ENCODE measurements at regions of chr10 and their contacts with region 1.

Region 1: DNA sequence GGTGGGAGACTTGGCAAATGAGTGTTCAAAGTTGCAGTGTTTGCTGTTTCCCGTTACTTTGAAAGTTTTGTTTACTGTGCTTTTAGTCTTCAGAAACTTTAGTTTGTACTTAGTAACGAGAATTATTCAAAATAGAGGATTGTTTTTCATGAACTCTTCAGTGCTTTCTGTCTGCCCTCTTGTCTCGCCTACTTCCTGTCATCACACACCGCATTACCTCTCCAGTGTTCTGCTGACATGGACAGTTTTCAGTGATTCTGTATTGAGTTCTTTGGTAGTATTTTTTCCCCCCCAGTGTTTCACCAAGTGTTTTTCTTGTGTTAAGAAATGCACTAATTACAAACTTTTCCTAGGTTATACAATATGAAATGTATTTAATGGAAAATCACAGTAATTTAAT is 207.0 kb downstream of the MLLT10 start:
- DNase-seq: peak in 12 of 14 experiments; percentile 17 to 85 (median 46)
- ATAC-seq: peak; percentile 93
- H3K4me3 ChIP-seq: no peak overlapping the region
- H3K4me3 Mint-ChIP-seq: peak overlapping the region; percentile 81
- H3K27ac ChIP-seq: peak overlapping the region; percentile 69 to 80
- H3K27ac Mint-ChIP-seq: peak overlapping the region; percentile 97
- H3K4me1 ChIP-seq: peaks cover 49% of the 10 kb centered on the region
- H3K4me1 Mint-ChIP-seq: peaks cover 67% of the 10 kb centered on the region
- H3K27me3 ChIP-seq: no peaks in the 10 kb centered on the region
- H3K27me3 Mint-ChIP-seq: no peaks in the 10 kb centered on the region
- CTCF ChIP-seq: no peak

Region 2: DNA sequence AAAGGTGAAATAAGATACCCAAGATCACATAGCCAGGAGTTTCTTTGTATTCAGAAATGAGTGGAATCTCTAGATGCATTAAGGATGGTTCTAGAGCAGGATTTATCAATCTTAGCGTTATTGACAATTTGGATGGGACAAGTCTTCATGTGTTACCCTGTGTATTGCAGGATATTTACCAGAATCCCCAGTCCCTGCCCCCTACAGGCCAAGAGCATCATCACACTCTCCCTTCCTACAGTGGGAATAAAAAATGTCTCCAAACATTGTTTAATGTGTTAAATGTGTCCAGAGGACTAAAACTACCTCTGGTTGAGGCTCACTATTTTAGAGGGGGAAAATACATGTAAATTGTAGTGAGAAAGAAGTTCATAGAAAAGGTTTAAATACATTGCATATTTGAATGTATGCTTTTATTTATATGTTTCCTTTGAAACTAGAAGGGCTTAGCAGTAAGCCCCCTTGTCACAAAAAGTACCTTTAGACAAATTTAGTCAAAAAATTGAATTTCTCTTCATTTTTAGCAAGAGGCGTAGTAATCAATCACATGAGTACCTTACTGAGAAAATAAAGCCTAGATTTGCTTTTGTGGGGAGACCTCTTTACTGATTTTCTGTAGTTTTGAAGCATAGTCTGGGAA is 65.7 kb before region 1 on chr10:
- CTCF ChIA-PET with region 1: no interaction called
- POLR2A ChIA-PET with region 1: no interaction called
- intact Hi-C with region 1: no loop called
- DNase-seq: peak in 9 of 14 experiments; percentile 4 to 61 (median 15)
- ATAC-seq: peak; percentile 78
- H3K4me3 ChIP-seq: no peak overlapping the region
- H3K4me3 Mint-ChIP-seq: no peak overlapping the region
- H3K27ac ChIP-seq: no peak overlapping the region
- H3K27ac Mint-ChIP-seq: no peak overlapping the region
- H3K4me1 ChIP-seq: no peaks in the 10 kb centered on the region
- H3K4me1 Mint-ChIP-seq: peaks cover 35% of the 10 kb centered on the region
- H3K27me3 ChIP-seq: no peaks in the 10 kb centered on the region
- H3K27me3 Mint-ChIP-seq: no peaks in the 10 kb centered on the region
- CTCF ChIP-seq: peak; percentile 82

Region 3: DNA sequence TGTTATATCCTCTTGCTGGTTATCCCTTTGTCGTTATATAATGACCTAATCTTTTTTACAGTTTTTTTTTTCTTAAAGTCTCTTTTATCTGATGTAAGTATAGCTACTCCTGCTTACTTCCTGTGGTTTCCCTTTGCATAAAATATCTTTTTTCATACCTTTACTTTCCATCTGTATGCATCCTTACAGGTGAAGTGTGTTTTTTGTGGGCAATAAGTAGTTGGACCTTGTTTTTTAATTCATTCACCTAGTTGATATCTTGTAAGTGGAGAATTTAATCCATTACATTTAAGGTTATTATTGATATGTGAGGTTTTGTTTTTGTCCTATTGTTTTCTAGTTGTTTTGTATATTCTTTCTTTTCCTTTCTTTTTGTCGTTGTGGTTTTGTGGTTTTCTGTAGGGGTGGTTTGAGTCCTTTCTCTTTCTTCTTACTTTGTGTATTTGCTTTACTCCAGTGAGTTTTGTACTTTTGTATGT is 38.3 kb before region 1 on chr10:
- CTCF ChIA-PET with region 1: no interaction called
- POLR2A ChIA-PET with region 1: no interaction called
- intact Hi-C with region 1: loop called in 1 of 2 experiments (anchors 5 kb)
- DNase-seq: peak in 3 of 14 experiments; percentile 48 to 74 (median 56)
- ATAC-seq: peak; percentile 86
- H3K4me3 ChIP-seq: no peak overlapping the region
- H3K4me3 Mint-ChIP-seq: peak overlapping the region; percentile 40
- H3K27ac ChIP-seq: no peak overlapping the region
- H3K27ac Mint-ChIP-seq: peak overlapping the region; percentile 55
- H3K4me1 ChIP-seq: peaks cover 18% of the 10 kb centered on the region
- H3K4me1 Mint-ChIP-seq: peaks cover 29% of the 10 kb centered on the region
- H3K27me3 ChIP-seq: no peaks in the 10 kb centered on the region
- H3K27me3 Mint-ChIP-seq: no peaks in the 10 kb centered on the region
- CTCF ChIP-seq: no peak

Region 4: DNA sequence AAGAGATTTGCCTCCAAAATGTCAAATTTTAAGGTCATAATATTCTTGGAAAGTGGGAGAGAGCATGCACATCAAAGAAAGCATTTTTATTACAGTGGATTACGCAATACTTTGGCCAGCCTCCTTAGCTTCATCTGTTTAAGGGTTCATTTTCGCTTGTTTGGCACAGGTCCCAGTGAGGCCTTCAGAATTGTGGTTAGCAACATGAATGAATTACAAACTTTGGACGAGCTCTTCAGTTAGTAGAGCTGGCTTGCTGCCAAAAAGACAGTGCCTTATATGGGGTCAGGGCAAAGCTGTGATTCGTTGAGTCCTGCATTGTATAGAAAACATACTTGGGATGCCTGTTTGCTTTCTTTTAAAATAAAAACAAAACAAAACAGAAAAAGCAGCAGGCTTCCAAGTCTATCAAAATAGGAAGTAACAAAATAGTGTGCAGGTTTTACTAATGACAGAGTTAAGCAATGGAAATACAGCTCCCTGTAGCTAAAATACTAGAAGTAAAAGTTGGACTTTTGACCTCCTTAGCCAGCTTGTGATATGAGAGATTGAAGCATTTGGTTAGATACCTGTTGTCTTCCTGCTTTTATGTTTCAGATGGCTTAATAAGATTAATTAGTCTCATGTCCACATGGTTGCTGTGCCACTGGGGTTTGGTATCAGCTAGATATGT is 16.2 kb before region 1 on chr10:
- CTCF ChIA-PET with region 1: interaction called, 4 read pairs
- POLR2A ChIA-PET with region 1: interaction called, 4 read pairs
- intact Hi-C with region 1: loop called in 1 of 2 experiments (anchors 2 kb)
- DNase-seq: peak in 13 of 14 experiments; percentile 28 to 77 (median 53)
- ATAC-seq: peak; percentile 59
- H3K4me3 ChIP-seq: no peak overlapping the region
- H3K4me3 Mint-ChIP-seq: no peak overlapping the region
- H3K27ac ChIP-seq: no peak overlapping the region
- H3K27ac Mint-ChIP-seq: peak overlapping the region; percentile 62
- H3K4me1 ChIP-seq: peaks cover 8% of the 10 kb centered on the region
- H3K4me1 Mint-ChIP-seq: peaks cover 52% of the 10 kb centered on the region
- H3K27me3 ChIP-seq: no peaks in the 10 kb centered on the region
- H3K27me3 Mint-ChIP-seq: no peaks in the 10 kb centered on the region
- CTCF ChIP-seq: no peak

Region 5: DNA sequence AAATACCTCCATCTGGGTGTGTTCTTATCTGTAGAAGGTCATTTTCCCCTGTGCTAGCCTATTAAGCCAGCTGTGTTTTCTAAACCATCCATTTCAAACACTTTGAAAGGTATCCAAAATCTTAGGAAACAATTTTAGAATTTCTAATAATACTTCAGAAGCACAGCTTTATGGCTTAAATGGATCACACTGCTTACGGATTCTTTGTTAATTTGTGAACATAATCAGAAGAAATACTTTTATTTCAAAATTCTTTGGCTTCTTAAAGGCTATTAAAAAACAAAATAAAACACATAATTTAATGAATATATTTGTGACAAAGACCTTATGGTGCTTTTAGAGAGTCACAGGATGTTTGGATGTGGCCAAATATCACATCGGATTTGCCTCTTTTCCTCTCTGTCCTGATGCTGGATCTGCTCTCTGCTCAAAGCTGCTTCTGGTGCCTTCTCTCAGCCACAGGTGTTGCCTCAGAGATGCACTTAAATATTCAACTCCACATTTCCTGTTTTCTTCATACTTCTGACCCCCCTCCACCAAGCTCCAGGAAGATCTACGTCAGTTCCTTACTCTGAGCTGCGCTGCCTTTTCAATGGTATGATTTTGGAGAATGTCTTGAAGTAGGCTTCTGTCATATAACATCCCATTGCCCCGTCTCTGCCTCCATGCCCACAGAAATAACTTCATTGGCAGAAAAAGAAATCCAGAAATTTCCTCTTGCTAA is 23.6 kb after region 1 on chr10:
- CTCF ChIA-PET with region 1: no interaction called
- POLR2A ChIA-PET with region 1: interaction called, 4 read pairs
- intact Hi-C with region 1: loop called in 1 of 2 experiments (anchors 2 kb)
- DNase-seq: peak in 9 of 14 experiments; percentile 5 to 69 (median 49)
- ATAC-seq: peak; percentile 96
- H3K4me3 ChIP-seq: no peak overlapping the region
- H3K4me3 Mint-ChIP-seq: peak overlapping the region; percentile 39
- H3K27ac ChIP-seq: peak overlapping the region; percentile 24 to 25
- H3K27ac Mint-ChIP-seq: peak overlapping the region; percentile 83
- H3K4me1 ChIP-seq: peaks cover 7% of the 10 kb centered on the region
- H3K4me1 Mint-ChIP-seq: peaks cover 14% of the 10 kb centered on the region
- H3K27me3 ChIP-seq: no peaks in the 10 kb centered on the region
- H3K27me3 Mint-ChIP-seq: no peaks in the 10 kb centered on the region
- CTCF ChIP-seq: no peak

Region 6: DNA sequence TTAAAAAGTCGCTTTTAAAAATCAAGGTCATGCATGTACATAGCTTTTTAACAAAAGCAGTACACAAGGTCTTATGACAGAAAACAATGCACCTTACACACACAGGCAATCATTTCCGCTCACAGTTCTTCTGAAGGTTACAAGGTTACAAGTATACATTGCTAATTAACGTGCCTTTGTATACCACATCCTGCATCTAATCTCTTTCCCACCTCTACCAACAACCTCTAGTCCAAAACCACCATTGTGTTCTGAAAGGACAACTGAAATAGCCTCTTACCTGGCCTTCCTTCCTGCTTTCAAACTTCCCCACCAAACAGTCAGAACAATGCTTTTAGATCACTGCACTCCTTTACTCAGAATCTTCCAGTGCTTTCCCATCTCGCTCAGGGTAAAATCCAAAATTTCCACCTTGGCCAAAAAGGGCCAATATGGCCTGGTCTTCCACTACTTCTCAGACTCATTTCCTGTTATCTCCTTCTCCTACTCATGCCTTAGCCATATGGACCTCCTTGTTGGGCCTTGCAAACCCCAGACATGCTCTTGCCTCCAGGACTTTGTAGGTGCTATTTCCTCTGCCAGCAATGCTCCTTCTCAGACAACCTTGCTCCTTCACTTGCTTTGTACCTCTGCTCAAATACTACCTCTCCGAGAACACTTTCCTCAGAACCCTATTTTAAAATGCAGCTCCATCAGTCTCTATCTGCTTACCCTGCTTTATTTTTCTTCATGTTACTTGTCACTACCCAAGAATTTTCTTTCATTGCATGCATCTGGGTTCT is 57.2 kb after region 1 on chr10:
- CTCF ChIA-PET with region 1: no interaction called
- POLR2A ChIA-PET with region 1: no interaction called
- intact Hi-C with region 1: loop called in 1 of 2 experiments (anchors 1 kb)
- DNase-seq: peak in 3 of 14 experiments; percentile 15 to 63 (median 27)
- ATAC-seq: peak; percentile 88
- H3K4me3 ChIP-seq: no peak overlapping the region
- H3K4me3 Mint-ChIP-seq: peak overlapping the region; percentile 31
- H3K27ac ChIP-seq: no peak overlapping the region
- H3K27ac Mint-ChIP-seq: peak overlapping the region; percentile 84
- H3K4me1 ChIP-seq: peaks cover 11% of the 10 kb centered on the region
- H3K4me1 Mint-ChIP-seq: peaks cover 35% of the 10 kb centered on the region
- H3K27me3 ChIP-seq: no peaks in the 10 kb centered on the region
- H3K27me3 Mint-ChIP-seq: no peaks in the 10 kb centered on the region
- CTCF ChIP-seq: no peak

Measured in CD4-positive, alpha-beta T cell (primary cell).